Activated CD8-positive, alpha-beta T cell treated with anti-CD3 and anti-CD28 coated beads, Interleukin-2, amount 10 ng/mL, durations not matched to agents 7 days and 5 days (primary cell): ENCODE measurements at regions of chr18 and their contacts with region 1.

Region 1: GRCh38 chr18:48675352-48675761 is 136.5 kb downstream of the CTIF start:
- DNase-seq: peak; percentile 88
- ATAC-seq: peak; percentile 95
- H3K4me3 Mint-ChIP-seq: no peak overlapping the region
- H3K27ac Mint-ChIP-seq: no peak overlapping the region
- H3K4me1 Mint-ChIP-seq: peaks cover 13% of the 10 kb centered on the region
- H3K27me3 Mint-ChIP-seq: no peaks in the 10 kb centered on the region

Region 2: DNA sequence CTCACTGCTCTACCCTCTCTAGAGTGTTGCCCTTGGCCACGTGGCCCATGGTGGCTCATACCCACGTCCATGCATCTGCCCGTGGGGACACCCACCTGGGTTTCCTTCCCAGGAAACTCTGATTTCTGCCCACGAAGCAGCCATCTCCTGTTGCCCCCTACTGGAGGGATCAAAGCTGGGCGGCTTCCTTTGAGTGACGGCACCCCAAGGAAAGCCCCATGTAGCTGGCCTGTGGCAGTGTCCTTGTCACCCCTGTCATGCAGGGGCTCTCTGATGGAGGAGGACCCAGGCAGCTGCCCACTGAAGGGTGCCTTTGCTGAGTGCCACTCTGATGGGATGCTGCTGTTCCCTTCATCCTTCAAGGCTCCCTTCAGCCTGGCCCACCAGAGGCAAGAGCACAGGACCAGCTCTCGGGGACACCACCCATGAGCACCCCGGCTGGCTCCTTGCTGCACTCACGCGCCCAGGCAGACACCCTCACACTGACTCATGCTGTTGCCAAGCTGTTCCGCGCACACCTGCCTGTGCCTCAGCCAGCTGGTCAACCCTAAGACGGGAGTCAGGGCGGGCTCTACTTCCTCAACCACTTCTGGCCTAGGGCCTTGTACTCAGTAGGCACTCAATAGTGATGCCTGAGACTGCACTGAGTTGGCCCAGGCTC is 35.5 kb before region 1 on chr18:
- CTCF ChIA-PET with region 1: no interaction called
- POLR2A ChIA-PET with region 1: no interaction called
- DNase-seq: no peak
- ATAC-seq: no peak
- H3K4me3 Mint-ChIP-seq: no peak overlapping the region
- H3K27ac Mint-ChIP-seq: no peak overlapping the region
- H3K4me1 Mint-ChIP-seq: no peaks in the 10 kb centered on the region
- H3K27me3 Mint-ChIP-seq: peaks cover 4% of the 10 kb centered on the region

Region 3: GRCh38 chr18:48663931-48664847 is 11.2 kb before region 1 on chr18:
- CTCF ChIA-PET with region 1: interaction called, 14 read pairs
- POLR2A ChIA-PET with region 1: no interaction called
- DNase-seq: peak; percentile 61
- ATAC-seq: no peak
- H3K4me3 Mint-ChIP-seq: no peak overlapping the region
- H3K27ac Mint-ChIP-seq: no peak overlapping the region
- H3K4me1 Mint-ChIP-seq: no peaks in the 10 kb centered on the region
- H3K27me3 Mint-ChIP-seq: peaks cover 2% of the 10 kb centered on the region

Region 4: GRCh38 chr18:49041435-49042245 is 366.3 kb after region 1 on chr18:
- CTCF ChIA-PET with region 1: interaction called, 12 read pairs
- POLR2A ChIA-PET with region 1: no interaction called
- DNase-seq: peak; percentile 71
- ATAC-seq: no peak
- H3K4me3 Mint-ChIP-seq: no peak overlapping the region
- H3K27ac Mint-ChIP-seq: no peak overlapping the region
- H3K4me1 Mint-ChIP-seq: peaks cover 12% of the 10 kb centered on the region
- H3K27me3 Mint-ChIP-seq: no peaks in the 10 kb centered on the region